ENCODE measurements at regions of chr10 and their contacts with region 1.

Region 1: GRCh38 chr10:761376-761775 is 71.9 kb upstream of the DIP2C start:
- DNase-seq: no peak
- H3K4me3 ChIP-seq: no peak overlapping the region
- H3K27ac ChIP-seq: no peak overlapping the region
- H3K4me1 ChIP-seq: no peaks in the 10 kb centered on the region
- H3K27me3 ChIP-seq: no peaks in the 10 kb centered on the region
- CTCF ChIP-seq: no peak
- EP300 ChIP-seq: no peak
- POLR2A ChIP-seq: no peak

Region 2: DNA sequence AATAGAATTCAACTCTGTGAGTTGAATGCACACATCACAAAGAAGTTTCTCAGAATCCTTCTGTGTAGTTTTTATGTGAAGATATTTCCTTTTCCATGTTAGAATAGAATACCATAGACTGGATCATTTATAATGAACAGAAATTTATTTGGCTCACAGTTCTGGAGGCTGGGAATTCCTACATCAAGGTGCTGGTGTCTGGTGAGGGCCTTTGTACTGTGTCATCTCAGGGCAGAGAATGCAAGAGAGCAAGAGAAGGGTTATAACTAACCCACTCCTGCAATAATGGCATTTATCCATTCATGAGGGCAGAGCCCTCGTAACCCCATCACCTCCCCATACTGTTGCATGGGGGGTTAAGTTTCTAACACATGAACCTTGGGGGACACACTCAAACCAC is 53.5 kb before region 1 on chr10:
- intact Hi-C with region 1: loop called (anchors 5 kb)
- DNase-seq: no peak
- H3K4me3 ChIP-seq: no peak overlapping the region
- H3K27ac ChIP-seq: no peak overlapping the region
- H3K4me1 ChIP-seq: no peaks in the 10 kb centered on the region
- H3K27me3 ChIP-seq: no peaks in the 10 kb centered on the region
- CTCF ChIP-seq: no peak
- EP300 ChIP-seq: no peak
- POLR2A ChIP-seq: no peak

Measured in sigmoid colon (tissue), 7 donors.